Right ventricle myocardium inferior (tissue), 1 donor: ENCODE measurements at regions of chr4 and their contacts with region 1.

Region 1: GRCh38 chr4:54384563-54384962 is 155.5 kb downstream of the PDGFRA start:
- DNase-seq: no peak
- ATAC-seq: no peak

Region 2: GRCh38 chr4:54433686-54434085 is 49.1 kb after region 1 on chr4:
- intact Hi-C with region 1: loop called (anchors 5 kb)
- DNase-seq: no peak
- ATAC-seq: no peak